PC-9 (cell line): ENCODE measurements at regions of chrX and their contacts with region 1.

Region 1: DNA sequence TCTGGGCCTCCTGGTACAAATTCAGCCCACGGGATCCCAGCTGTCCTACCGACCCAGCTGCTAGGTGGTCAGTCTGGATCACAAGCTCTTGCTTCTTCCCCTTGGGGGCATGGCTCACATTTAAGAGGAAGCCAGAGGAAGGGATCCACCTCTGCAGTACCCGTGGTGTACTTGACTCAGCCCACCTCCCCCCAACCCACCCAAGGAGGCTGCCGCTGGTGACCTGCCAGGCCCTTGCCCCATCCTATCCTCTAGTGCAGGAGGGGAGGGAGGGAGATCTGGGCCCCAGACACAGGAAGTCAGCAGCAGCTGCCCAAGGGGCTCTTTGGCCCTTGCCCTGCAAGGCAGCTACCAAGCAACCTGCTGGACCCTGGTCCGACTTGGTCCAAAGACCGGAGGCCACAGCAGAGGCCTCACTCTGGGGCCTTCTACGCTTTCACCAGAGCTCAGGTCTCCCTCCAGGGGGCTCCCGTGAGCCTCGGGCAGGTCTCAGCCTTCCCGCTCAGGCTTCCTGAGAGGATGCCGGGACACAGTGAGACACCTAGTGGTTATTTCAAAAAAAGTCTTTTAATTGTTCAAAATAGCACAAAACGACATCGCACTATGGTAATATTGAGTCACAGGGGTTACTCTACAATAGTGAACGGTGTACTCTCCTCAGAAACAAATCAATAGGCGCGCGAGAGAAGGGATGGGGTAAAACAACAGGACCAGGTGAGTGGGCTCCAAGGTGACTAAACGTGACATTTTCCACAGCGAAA is 2.7 kb upstream of the RENBP start:
- DNase-seq: peak; percentile 58 to 86
- H3K4me3 ChIP-seq: no peak overlapping the region
- H3K27ac ChIP-seq: no peak overlapping the region
- H3K4me1 ChIP-seq: no peaks in the 10 kb centered on the region
- H3K27me3 ChIP-seq: no peaks in the 10 kb centered on the region
- CTCF ChIP-seq: peak; percentile 83

Region 2: GRCh38 chrX:152958524-152959465 is 988.4 kb before region 1 on chrX:
- CTCF ChIA-PET with region 1: no interaction called
- POLR2A ChIA-PET with region 1: no interaction called
- intact Hi-C with region 1: loop called (anchors 5 kb)
- DNase-seq: peak; percentile 69 to 83
- H3K4me3 ChIP-seq: peak overlapping the region; percentile 13; the same call in 1 of the 2 replicates
- H3K27ac ChIP-seq: no peak overlapping the region
- H3K4me1 ChIP-seq: peaks cover 9% of the 10 kb centered on the region; the same call in 1 of the 2 replicates
- H3K27me3 ChIP-seq: no peaks in the 10 kb centered on the region
- CTCF ChIP-seq: peak; percentile 98

Region 3: GRCh38 chrX:153554519-153555167 is 392.5 kb before region 1 on chrX:
- CTCF ChIA-PET with region 1: no interaction called
- POLR2A ChIA-PET with region 1: no interaction called
- intact Hi-C with region 1: loop called (anchors 5 kb)
- DNase-seq: peak in 1 of 2 experiments; percentile 76
- H3K4me3 ChIP-seq: no peak overlapping the region
- H3K27ac ChIP-seq: no peak overlapping the region
- H3K4me1 ChIP-seq: no peaks in the 10 kb centered on the region
- H3K27me3 ChIP-seq: peaks cover 70% of the 10 kb centered on the region
- CTCF ChIP-seq: peak; percentile 74

Region 4: GRCh38 chrX:153910446-153910845 is 36.7 kb before region 1 on chrX:
- CTCF ChIA-PET with region 1: interaction called, 19 read pairs
- POLR2A ChIA-PET with region 1: no interaction called
- intact Hi-C with region 1: no loop called
- DNase-seq: no peak
- H3K4me3 ChIP-seq: no peak overlapping the region
- H3K27ac ChIP-seq: no peak overlapping the region
- H3K4me1 ChIP-seq: no peaks in the 10 kb centered on the region
- H3K27me3 ChIP-seq: no peaks in the 10 kb centered on the region
- CTCF ChIP-seq: no peak

Region 5: GRCh38 chrX:153971450-153972367 is 24.5 kb after region 1 on chrX and contains the start of gene HCFC1:
- CTCF ChIA-PET with region 1: no interaction called
- POLR2A ChIA-PET with region 1: interaction called, 10 read pairs
- intact Hi-C with region 1: no loop called
- DNase-seq: peak; percentile 75 to 90
- H3K4me3 ChIP-seq: peak within 1 kb of the TSS; percentile 92
- H3K27ac ChIP-seq: peak within 1 kb of the TSS; percentile 99
- H3K4me1 ChIP-seq: peaks cover 13% of the 10 kb centered on the region
- H3K27me3 ChIP-seq: no peaks in the 10 kb centered on the region
- CTCF ChIP-seq: no peak
- total RNA-seq, gene HCFC1: 67.1 and 79.9 TPM in 2 replicates